GM10248 (cell line): ENCODE measurements at regions of chr6 and their contacts with region 1.

Region 1: GRCh38 chr6:34986845-34987246 is 97.8 kb downstream of the ANKS1A start:
- DNase-seq: peak; percentile 68
- CTCF ChIP-seq: peak; percentile 62

Region 2: GRCh38 chr6:35011096-35012041 is 24.5 kb after region 1 on chr6:
- CTCF ChIA-PET with region 1: interaction called, 43 read pairs
- POLR2A ChIA-PET with region 1: no interaction called
- DNase-seq: peak; percentile 58
- CTCF ChIP-seq: peak; percentile 1

Region 3: DNA sequence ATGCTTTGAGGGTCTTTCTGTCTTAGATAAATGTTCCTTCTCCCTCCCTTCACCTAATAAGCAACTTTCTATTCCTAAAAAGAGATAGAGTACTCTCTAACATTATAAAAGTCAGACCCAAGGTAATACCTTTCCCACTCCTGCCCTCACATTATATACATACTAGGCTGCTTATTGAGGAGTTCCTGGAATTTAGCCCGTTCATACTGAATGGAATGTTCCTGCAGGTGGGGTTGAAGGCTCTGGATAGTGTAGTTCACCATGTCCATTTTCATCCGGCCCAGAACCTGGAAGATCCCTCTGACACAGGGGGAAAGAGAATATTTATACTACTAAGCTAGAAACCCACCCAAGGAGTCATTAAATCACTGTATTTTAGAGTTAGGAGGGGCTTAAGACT is 133.9 kb after region 1 on chr6:
- CTCF ChIA-PET with region 1: interaction called, 11 read pairs
- POLR2A ChIA-PET with region 1: no interaction called
- DNase-seq: no peak
- CTCF ChIP-seq: no peak

Region 4: DNA sequence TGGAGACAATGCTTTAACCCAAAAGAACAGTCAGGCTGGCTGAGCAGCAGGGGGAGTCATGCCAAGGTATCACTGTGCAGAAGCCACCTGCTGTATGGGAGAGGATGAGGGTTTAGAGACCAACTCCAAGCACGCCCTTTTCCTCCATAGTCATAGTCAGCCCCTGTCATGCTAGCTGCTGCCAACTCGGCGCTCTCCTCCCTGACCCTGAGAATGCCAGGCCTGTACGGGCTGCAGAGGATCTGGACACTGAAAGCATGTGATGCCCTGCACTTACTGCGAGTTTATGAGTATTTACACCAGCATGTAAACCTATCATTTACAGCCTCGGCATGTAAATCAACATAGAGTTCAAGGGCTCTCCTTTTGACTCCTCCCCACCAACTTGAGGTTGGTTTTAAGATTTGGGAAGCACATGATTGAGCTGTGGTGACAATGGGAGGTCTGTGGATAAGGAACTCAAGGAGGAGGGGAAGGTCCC is 215.3 kb after region 1 on chr6:
- CTCF ChIA-PET with region 1: interaction called, 72 read pairs
- POLR2A ChIA-PET with region 1: no interaction called
- DNase-seq: no peak
- CTCF ChIP-seq: no peak